ENCODE measurements at regions of chr17 and their contacts with region 1.

Region 1: GRCh38 chr17:39872751-39873150 is 4.7 kb downstream of the ZPBP2 start:
- DNase-seq: peak; percentile 78
- H3K4me3 Mint-ChIP-seq: no peak overlapping the region
- H3K27ac Mint-ChIP-seq: no peak overlapping the region
- H3K4me1 Mint-ChIP-seq: no peaks in the 10 kb centered on the region
- H3K27me3 Mint-ChIP-seq: peaks cover 11% of the 10 kb centered on the region
- CTCF ChIP-seq: no peak

Region 2: GRCh38 chr17:39676198-39676819 is 196.4 kb before region 1 on chr17:
- CTCF ChIA-PET with region 1: interaction called, 33 read pairs
- intact Hi-C with region 1: no loop called
- DNase-seq: peak; percentile 100
- H3K4me3 Mint-ChIP-seq: peak overlapping the region; percentile 3
- H3K27ac Mint-ChIP-seq: peak overlapping the region; percentile 62
- H3K4me1 Mint-ChIP-seq: peaks cover 91% of the 10 kb centered on the region
- H3K27me3 Mint-ChIP-seq: peaks cover 6% of the 10 kb centered on the region
- CTCF ChIP-seq: no peak

Region 3: DNA sequence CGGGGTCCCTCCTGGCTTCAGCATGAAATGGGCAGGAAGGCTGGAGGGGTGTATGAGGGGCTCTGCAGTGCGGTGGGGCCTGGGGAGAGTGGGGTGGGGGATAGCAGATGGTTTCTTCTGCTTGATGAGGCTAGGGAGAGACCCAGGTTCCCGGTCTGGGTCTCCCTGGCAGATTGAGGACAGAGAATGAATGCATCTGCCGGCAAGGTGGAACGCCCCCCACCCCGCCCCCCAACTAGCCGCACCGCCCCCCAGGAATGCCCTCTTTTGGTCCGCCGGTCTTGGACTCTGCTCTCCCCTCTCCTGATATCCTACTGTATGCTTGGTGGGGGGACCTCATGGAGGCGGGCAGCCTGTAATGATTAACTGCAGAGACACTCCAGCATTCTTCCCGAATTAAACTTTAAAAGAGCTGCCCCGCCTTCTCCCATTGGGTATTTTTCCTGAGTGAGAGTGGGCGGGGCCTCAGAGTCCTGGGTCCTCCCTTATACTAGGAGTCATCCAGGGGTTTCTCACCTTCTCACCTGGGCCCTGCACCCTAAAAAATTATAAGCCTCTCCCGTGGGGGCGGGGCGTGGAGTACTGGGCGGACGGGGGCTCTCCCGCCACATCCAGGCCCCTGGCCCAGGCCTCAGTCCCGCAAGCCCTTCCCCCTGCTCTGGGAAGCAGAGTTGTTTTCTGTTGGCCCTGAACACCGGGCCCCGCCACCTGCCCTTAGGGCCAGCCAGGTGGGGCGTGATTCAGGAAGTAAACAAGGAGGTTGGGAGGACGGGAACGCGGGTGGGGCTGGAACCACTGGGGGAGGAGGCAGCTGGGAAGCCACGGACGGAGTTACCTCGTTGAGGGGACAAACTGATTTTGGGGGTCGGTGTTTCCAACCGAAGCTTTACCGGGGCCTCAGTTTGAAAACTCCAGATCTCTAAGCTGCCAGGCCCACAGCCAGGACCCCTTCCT is 133.5 kb before region 1 on chr17:
- CTCF ChIA-PET with region 1: interaction called, 66 read pairs
- intact Hi-C with region 1: no loop called
- DNase-seq: peak; percentile 100
- H3K4me3 Mint-ChIP-seq: peak overlapping the region; percentile 77
- H3K27ac Mint-ChIP-seq: peak overlapping the region; percentile 21
- H3K4me1 Mint-ChIP-seq: peaks cover 54% of the 10 kb centered on the region
- H3K27me3 Mint-ChIP-seq: no peaks in the 10 kb centered on the region
- CTCF ChIP-seq: no peak

Region 4: GRCh38 chr17:39794249-39794970 is 78.3 kb before region 1 on chr17:
- CTCF ChIA-PET with region 1: interaction called, 45 read pairs
- intact Hi-C with region 1: no loop called
- DNase-seq: peak; percentile 73
- H3K4me3 Mint-ChIP-seq: no peak overlapping the region
- H3K27ac Mint-ChIP-seq: no peak overlapping the region
- H3K4me1 Mint-ChIP-seq: no peaks in the 10 kb centered on the region
- H3K27me3 Mint-ChIP-seq: no peaks in the 10 kb centered on the region
- CTCF ChIP-seq: no peak

Region 5: GRCh38 chr17:39835038-39835786 is 37.5 kb before region 1 on chr17:
- CTCF ChIA-PET with region 1: interaction called, 182 read pairs
- intact Hi-C with region 1: no loop called
- DNase-seq: peak; percentile 79
- H3K4me3 Mint-ChIP-seq: no peak overlapping the region
- H3K27ac Mint-ChIP-seq: no peak overlapping the region
- H3K4me1 Mint-ChIP-seq: no peaks in the 10 kb centered on the region
- H3K27me3 Mint-ChIP-seq: no peaks in the 10 kb centered on the region
- CTCF ChIP-seq: no peak

Region 6: GRCh38 chr17:39927101-39927928 is 54.6 kb after region 1 on chr17 and contains the starts of genes LRRC3C and ORMDL3:
- CTCF ChIA-PET with region 1: interaction called, 84 read pairs
- intact Hi-C with region 1: no loop called
- DNase-seq: no peak
- H3K4me3 Mint-ChIP-seq: peak within 1 kb of the TSS; percentile 74
- H3K27ac Mint-ChIP-seq: peak within 1 kb of the TSS; percentile 66
- H3K4me1 Mint-ChIP-seq: peaks cover 60% of the 10 kb centered on the region
- H3K27me3 Mint-ChIP-seq: no peaks in the 10 kb centered on the region
- CTCF ChIP-seq: no peak
- total RNA-seq, gene LRRC3C: not detected in 2 replicates
- total RNA-seq, gene ORMDL3: 1,738 and 1,968 TPM in 2 replicates

Region 7: GRCh38 chr17:40194821-40195220 is 322.1 kb after region 1 on chr17:
- CTCF ChIA-PET with region 1: no interaction called
- intact Hi-C with region 1: no loop called
- DNase-seq: no peak
- H3K4me3 Mint-ChIP-seq: no peak overlapping the region
- H3K27ac Mint-ChIP-seq: no peak overlapping the region
- H3K4me1 Mint-ChIP-seq: no peaks in the 10 kb centered on the region
- H3K27me3 Mint-ChIP-seq: no peaks in the 10 kb centered on the region
- CTCF ChIP-seq: no peak

Measured in Calu3 (cell line).